SK-N-SH (cell line): ENCODE measurements at regions of chr11 and their contacts with region 1.

Region 1: DNA sequence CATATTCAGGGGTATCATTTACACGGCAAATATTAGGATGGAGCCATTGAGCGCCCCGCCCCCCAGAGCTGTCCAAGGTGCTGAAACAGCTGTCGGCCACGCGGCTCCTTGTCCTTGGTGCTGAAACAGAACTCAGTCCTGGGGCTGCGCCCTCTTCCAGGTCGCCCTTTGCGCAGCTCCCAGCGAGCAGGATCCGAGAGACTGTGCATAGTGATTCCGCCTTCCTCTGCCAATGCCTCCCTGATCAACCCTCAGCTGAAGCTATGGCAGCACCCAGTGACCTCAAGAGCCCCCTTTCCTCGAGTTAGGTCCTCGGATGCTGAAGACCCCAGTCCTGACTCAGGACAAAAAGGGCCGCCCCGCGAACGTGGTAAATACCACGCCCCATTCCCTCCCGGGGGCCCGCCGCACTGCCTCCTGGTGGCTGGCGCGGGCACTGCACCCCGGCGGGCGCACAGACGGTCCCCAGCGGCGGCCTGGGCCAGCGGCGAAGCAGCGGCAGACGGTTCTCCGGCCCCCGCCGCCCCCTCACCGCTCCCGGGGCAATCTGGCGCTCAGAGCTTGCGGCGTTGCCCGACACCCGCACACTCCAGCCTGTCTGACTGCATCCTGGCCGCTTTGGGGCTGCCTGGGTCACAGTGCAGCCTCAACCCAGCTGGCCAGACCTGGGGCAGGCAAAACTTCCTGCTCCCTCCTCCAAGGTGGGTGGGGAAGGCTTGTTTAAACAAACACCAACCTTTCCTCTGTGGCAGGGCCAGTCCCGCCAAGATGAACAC is 13.4 kb downstream of the SYT7 start:
- DNase-seq: peak; percentile 63
- H3K4me3 ChIP-seq: no peak overlapping the region; a peak in 1 of 4 replicates
- H3K27ac ChIP-seq: no peak overlapping the region; a peak in 1 of 4 replicates
- H3K4me1 ChIP-seq: peaks cover 0 to 79% of the 10 kb centered on the region in 2 experiments; a peak in 1 of 4 replicates
- H3K27me3 ChIP-seq: no peaks in the 10 kb centered on the region; the same call in 1 of the 2 replicates
- CTCF ChIP-seq: no peak; the same call in none of the 2 replicates
- EP300 ChIP-seq: no peak
- RAD21 ChIP-seq: no peak

Region 2: DNA sequence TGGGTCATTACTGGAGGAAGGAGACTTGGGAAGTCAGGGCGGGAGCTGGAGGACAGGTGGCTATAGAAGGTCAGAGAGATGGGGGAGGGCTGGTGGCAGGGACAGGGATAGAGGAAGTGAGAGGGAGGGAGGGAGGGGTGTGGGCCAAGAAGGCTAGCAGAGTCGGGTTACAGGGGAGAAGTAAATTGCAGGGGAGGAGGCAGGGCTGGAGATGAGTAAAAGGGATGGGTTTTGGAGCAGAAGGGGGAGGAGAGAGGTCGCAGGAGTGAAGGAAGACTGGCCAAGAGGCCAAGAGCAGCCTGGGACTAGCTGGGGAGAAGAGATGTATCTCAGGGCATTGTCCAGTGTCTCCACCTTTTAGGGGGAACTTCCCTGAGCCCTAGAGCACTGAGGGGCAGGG is 25.9 kb before region 1 on chr11:
- CTCF ChIA-PET with region 1: interaction called, 14 read pairs
- POLR2A ChIA-PET with region 1: no interaction called
- DNase-seq: peak; percentile 63
- H3K4me3 ChIP-seq: no peak overlapping the region
- H3K27ac ChIP-seq: peak overlapping the region in 1 of 2 experiments; percentile 88; a peak in 2 of 4 replicates
- H3K4me1 ChIP-seq: peaks cover 0 to 63% of the 10 kb centered on the region in 2 experiments; a peak in 2 of 4 replicates
- H3K27me3 ChIP-seq: no peaks in the 10 kb centered on the region
- CTCF ChIP-seq: no peak
- EP300 ChIP-seq: no peak
- RAD21 ChIP-seq: no peak

Region 3: GRCh38 chr11:61549662-61550568 is 17.6 kb before region 1 on chr11:
- CTCF ChIA-PET with region 1: interaction called, 26 read pairs
- POLR2A ChIA-PET with region 1: interaction called, 4 read pairs
- DNase-seq: no peak
- H3K4me3 ChIP-seq: no peak overlapping the region
- H3K27ac ChIP-seq: no peak overlapping the region; a peak in 1 of 4 replicates
- H3K4me1 ChIP-seq: peaks cover 0 to 46% of the 10 kb centered on the region in 2 experiments; a peak in 1 of 4 replicates
- H3K27me3 ChIP-seq: peaks cover 16% of the 10 kb centered on the region
- CTCF ChIP-seq: no peak
- EP300 ChIP-seq: no peak
- RAD21 ChIP-seq: no peak

Region 4: DNA sequence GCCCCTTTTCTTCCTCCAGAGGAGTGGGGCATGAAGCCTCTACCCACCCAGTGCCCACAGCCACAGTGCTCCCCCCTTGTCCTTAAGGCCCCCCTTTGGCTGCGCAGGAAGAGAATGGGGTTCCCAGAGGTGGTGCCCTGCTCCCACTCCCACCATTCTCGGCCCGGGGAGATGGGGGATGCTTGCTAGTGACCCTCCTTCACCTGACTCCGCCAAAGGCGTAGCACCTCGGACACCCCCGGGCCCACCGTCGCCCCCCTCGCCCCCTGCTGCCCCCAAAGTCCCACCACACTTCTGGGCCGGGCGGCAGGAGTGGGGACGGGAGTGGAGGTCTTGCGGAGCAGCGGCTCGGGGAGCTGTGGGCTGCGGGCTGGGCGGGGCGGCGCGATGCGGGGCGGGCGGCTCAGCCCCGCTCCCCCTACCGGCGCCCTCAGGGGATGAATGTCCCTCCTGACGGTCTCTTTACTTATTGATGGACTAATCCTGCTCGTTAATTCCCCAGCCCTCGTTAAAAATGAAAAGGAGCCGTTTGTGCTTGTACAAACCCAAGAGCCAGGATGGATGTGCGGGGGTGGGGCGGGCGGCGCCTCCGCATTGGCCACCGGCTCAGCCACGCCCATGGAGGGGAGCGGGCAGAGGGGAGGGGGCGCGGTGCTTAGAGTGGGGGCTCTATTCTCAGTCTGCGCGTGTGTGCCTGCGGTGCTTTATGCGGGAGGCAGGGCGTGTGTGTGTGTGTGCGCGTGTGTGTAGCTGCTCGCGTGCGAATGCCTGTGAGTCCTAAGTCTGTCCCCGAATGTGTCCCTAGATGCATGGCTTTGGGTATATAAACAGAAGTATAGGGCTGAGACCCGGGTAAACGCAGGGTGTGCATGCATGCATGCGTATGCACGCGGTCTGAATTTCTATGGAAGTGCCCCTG is 12.2 kb before region 1 on chr11:
- CTCF ChIA-PET with region 1: interaction called, 26 read pairs
- POLR2A ChIA-PET with region 1: interaction called, 4 read pairs
- DNase-seq: peak; percentile 90
- H3K4me3 ChIP-seq: peak overlapping the region in 1 of 2 experiments; percentile 1; a peak in 1 of 4 replicates
- H3K27ac ChIP-seq: peak overlapping the region in 1 of 2 experiments; percentile 67; a peak in 2 of 4 replicates
- H3K4me1 ChIP-seq: peaks cover 0 to 65% of the 10 kb centered on the region in 2 experiments; a peak in 1 of 4 replicates
- H3K27me3 ChIP-seq: peaks cover 37% of the 10 kb centered on the region
- CTCF ChIP-seq: peak; percentile 34
- EP300 ChIP-seq: no peak
- RAD21 ChIP-seq: no peak